ENCODE measurements at regions of chr16 and their contacts with region 1.

Region 1: GRCh38 chr16:27449434-27450195 is 47.6 kb downstream of the IL21R start:
- DNase-seq: no peak
- H3K4me3 ChIP-seq: no peak overlapping the region
- CTCF ChIP-seq: no peak

Region 2: GRCh38 chr16:27461483-27462171 is 12.0 kb after region 1 on chr16:
- CTCF ChIA-PET with region 1: interaction called, 11 read pairs
- POLR2A ChIA-PET with region 1: no interaction called
- DNase-seq: no peak
- H3K4me3 ChIP-seq: no peak overlapping the region
- CTCF ChIP-seq: no peak

Region 3: GRCh38 chr16:27600381-27600780 is 150.8 kb after region 1 on chr16:
- CTCF ChIA-PET with region 1: no interaction called
- POLR2A ChIA-PET with region 1: no interaction called
- DNase-seq: no peak
- H3K4me3 ChIP-seq: no peak overlapping the region
- CTCF ChIP-seq: no peak

Measured in AG04449 (cell line).